ENCODE measurements at regions of chr19 and their contacts with region 1.

Region 1: GRCh38 chr19:32674959-32675719 is at the start of gene ANKRD27:
- DNase-seq: peak; percentile 98 to 99
- H3K4me3 ChIP-seq: peak within 1 kb of the TSS; percentile 58 to 99 (median 98)
- H3K27ac ChIP-seq: peak within 1 kb of the TSS; percentile 40 to 82 (median 63)
- H3K4me1 ChIP-seq: peaks cover 21 to 24% of the 10 kb centered on the region in 2 donors
- H3K27me3 ChIP-seq: no peaks in the 10 kb centered on the region
- CTCF ChIP-seq: peak in 1 of 6 experiments; percentile 20
- POLR2A ChIP-seq: peak in 1 of 2 donors; percentile 83
- total RNA-seq, gene ANKRD27: 29.7 to 64.8 (median 48.7) TPM

Region 2: DNA sequence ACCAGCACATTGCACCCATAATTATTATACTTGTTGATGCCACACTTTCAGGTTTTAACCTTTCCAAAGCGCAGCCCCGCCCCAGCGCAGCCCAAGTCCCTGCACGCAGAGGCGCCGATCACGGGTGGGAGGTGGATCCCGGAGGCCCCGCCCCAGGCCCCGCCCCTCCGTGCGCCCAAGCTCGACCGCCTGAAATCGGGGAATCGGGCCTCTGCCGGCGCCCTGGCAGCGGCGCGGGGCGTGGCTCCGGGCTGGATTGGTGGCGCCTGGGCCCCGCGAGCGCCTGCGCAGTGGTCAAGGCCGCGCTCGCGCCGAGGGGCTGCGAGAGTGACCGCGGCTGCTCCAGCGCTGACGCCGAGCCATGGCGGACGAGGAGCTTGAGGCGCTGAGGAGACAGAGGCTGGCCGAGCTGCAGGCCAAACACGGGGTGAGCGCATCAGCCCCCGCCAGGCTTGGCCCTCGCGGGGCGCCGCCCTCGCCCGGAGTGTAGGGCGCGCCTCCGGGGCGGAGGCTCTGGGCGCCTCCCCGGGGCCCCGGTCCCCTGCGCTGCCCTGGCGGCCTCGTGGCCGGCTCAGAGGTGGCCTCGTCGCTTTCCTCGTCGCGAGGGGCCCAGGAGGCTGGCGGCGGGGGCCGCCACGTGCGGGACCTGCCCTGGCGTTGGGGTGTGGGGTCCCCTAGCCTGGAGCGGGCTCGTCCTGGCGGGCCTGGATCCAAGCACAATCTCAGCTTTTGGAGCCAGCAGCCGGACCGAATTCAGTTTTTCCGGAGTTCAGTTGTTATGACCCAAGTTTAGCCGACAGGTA is 94.0 kb before region 1 on chr19 and contains the start of gene PDCD5:
- intact Hi-C with region 1: loop called (anchors 10 kb)
- DNase-seq: peak; percentile 98
- H3K4me3 ChIP-seq: peak within 1 kb of the TSS; percentile 42 to 83 (median 57)
- H3K27ac ChIP-seq: peak within 1 kb of the TSS; percentile 39 to 84 (median 67)
- H3K4me1 ChIP-seq: peaks cover 3 to 5% of the 10 kb centered on the region in 2 donors
- H3K27me3 ChIP-seq: no peaks in the 10 kb centered on the region
- CTCF ChIP-seq: peak in 1 of 6 experiments; percentile 4
- POLR2A ChIP-seq: peak in 1 of 2 donors; percentile 94
- total RNA-seq, gene PDCD5: 70.0 to 111 (median 93.7) TPM

Measured in thyroid gland (tissue), 4 donors.